H1 (cell line): ENCODE measurements at regions of chr10 and their contacts with region 1.

Region 1: DNA sequence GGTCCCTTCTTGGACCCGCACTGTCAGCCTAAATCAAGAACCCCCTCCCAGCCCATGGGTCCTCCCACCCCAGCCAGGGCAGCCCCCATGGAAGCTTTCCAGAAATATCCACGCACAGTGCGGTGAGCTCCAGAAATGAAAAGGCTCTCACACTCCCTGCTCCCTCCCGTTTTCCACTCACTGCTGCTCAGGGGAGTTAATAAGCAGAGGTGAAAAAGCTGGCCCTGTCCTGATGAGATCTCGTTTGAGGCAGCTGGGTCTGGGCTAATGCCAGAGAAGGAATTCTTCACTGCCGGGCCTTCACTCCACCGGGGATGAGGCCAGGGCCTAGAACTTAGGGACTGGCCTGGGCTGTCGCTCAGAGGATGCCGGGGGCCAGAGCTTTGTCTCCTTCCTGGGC is 102.2 kb downstream of the ZMIZ1 start:
- DNase-seq: no peak
- H3K4me3 ChIP-seq: no peak overlapping the region
- H3K27ac ChIP-seq: no peak overlapping the region
- H3K4me1 ChIP-seq: peaks cover 0 to 17% (median 5%) of the 10 kb centered on the region in 4 experiments; a peak in 5 of 7 replicates
- H3K27me3 ChIP-seq: no peaks in the 10 kb centered on the region; a peak in 1 of 7 replicates
- CTCF ChIP-seq: no peak
- EP300 ChIP-seq: no peak
- POLR2A ChIP-seq: no peak
- RAD21 ChIP-seq: no peak

Region 2: DNA sequence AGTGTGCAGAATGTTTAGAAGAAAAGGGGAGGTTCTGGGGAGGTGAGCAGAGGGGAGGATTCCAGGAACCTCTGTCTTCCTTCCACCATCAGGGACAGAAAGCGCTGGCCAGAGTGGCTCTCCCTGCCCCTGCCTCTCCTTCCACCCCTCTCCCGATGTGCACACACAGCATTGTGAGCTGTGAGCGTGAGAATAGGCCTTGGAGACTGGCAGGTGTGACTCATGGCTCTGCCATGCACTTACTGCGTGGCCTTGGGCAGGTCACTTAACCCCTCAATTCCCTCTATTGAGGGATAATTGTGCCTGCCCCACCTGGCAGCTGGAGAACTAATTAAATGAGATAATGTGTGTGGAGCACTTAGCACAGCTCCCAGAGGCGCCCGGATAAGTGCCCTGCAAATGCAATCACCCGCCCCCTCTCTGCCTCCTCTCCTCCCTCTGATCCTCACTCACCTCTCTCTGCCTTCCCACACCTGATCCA is 13.2 kb after region 1 on chr10:
- CTCF ChIA-PET with region 1: interaction called, 396 read pairs
- POLR2A ChIA-PET with region 1: interaction called, 4 read pairs
- DNase-seq: no peak
- H3K4me3 ChIP-seq: no peak overlapping the region
- H3K27ac ChIP-seq: no peak overlapping the region
- H3K4me1 ChIP-seq: peaks cover 4 to 24% (median 17%) of the 10 kb centered on the region in 4 experiments
- H3K27me3 ChIP-seq: no peaks in the 10 kb centered on the region; a peak in 1 of 7 replicates
- CTCF ChIP-seq: no peak
- EP300 ChIP-seq: no peak
- POLR2A ChIP-seq: no peak
- RAD21 ChIP-seq: no peak

Region 3: GRCh38 chr10:79202188-79203013 is 31.4 kb after region 1 on chr10:
- CTCF ChIA-PET with region 1: interaction called, 396 read pairs
- POLR2A ChIA-PET with region 1: no interaction called
- DNase-seq: peak in 1 of 2 experiments; percentile 86
- H3K4me3 ChIP-seq: no peak overlapping the region
- H3K27ac ChIP-seq: no peak overlapping the region
- H3K4me1 ChIP-seq: no peaks in the 10 kb centered on the region
- H3K27me3 ChIP-seq: no peaks in the 10 kb centered on the region
- CTCF ChIP-seq: peak; percentile 62 to 83 (median 75)
- EP300 ChIP-seq: no peak
- POLR2A ChIP-seq: no peak
- RAD21 ChIP-seq: peak; percentile 65 to 76